ENCODE measurements at regions of chr5 and their contacts with region 1.

Region 1: DNA sequence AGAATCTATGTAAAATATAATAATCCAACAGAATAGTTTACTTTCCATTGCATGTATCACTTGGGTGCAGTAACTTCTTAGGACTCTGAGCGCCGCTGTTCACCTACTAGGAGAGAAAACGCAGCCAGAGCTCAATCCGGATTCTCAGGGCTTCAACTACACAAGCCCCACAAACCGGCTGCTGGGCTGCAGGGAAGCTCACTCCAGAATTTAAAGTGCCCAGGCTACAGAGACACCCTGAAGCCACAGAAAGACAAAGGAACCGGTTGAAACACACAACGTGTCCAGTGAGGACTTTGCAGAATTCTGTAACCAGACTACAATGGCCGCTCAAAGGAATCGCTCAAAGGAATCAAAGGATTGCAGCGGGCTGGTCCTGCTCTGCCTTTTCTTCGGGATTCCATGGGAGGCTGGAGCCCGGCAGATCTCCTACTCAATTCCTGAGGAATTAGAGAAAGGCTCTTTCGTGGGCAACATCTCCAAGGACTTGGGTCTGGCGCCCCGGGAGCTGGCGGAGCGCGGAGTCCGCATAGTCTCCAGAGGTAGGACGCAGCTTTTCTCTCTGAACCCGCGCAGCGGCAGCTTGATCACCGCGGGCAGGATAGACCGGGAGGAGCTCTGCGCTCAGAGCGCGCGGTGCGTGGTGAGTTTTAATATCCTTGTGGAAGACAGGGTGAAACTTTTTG is at the start of gene PCDHGA10:
- DNase-seq: peak in 2 of 4 donors; percentile 24 to 80
- ATAC-seq: peak; percentile 71
- H3K4me3 ChIP-seq: peak within 1 kb of the TSS in 1 of 2 donors; percentile 33
- H3K27ac ChIP-seq: no peak within 1 kb of the TSS
- H3K4me1 ChIP-seq: peaks cover 0 to 5% of the 10 kb centered on the region in 2 donors
- H3K27me3 ChIP-seq: peaks cover 25 to 94% of the 10 kb centered on the region in 2 donors
- CTCF ChIP-seq: peak; percentile 29 to 49
- polyA plus RNA-seq, gene PCDHGA10: 3.9 to 5.5 (median 4.7) TPM

Region 2: GRCh38 chr5:140916349-140916748 is 496.6 kb before region 1 on chr5:
- intact Hi-C with region 1: no loop called
- DNase-seq: no peak
- ATAC-seq: no peak
- H3K4me3 ChIP-seq: no peak overlapping the region
- H3K27ac ChIP-seq: no peak overlapping the region
- H3K4me1 ChIP-seq: no peaks in the 10 kb centered on the region
- H3K27me3 ChIP-seq: no peaks in the 10 kb centered on the region
- CTCF ChIP-seq: no peak

Region 3: GRCh38 chr5:141524604-141525597 is 111.9 kb after region 1 on chr5:
- intact Hi-C with region 1: loop called in 1 of 2 experiments (anchors 10 kb)
- DNase-seq: peak; percentile 80 to 97 (median 93)
- ATAC-seq: peak; percentile 93
- H3K4me3 ChIP-seq: no peak overlapping the region
- H3K27ac ChIP-seq: peak overlapping the region; percentile 60 to 72
- H3K4me1 ChIP-seq: peaks cover 10 to 66% of the 10 kb centered on the region in 2 donors
- H3K27me3 ChIP-seq: no peaks in the 10 kb centered on the region
- CTCF ChIP-seq: peak; percentile 97 to 98

Region 4: GRCh38 chr5:141564216-141564692 is 151.3 kb after region 1 on chr5:
- intact Hi-C with region 1: loop called in 1 of 2 experiments (anchors 10 kb)
- DNase-seq: peak in 2 of 4 donors; percentile 81 to 94
- ATAC-seq: peak; percentile 74
- H3K4me3 ChIP-seq: no peak overlapping the region
- H3K27ac ChIP-seq: peak overlapping the region in 1 of 2 donors; percentile 60
- H3K4me1 ChIP-seq: peaks cover 14 to 44% of the 10 kb centered on the region in 2 donors
- H3K27me3 ChIP-seq: no peaks in the 10 kb centered on the region
- CTCF ChIP-seq: peak; percentile 86 to 90

Region 5: GRCh38 chr5:141742866-141743851 is 330.2 kb after region 1 on chr5:
- intact Hi-C with region 1: no loop called
- DNase-seq: peak in 3 of 4 donors; percentile 30 to 70 (median 32)
- ATAC-seq: peak; percentile 70
- H3K4me3 ChIP-seq: no peak overlapping the region
- H3K27ac ChIP-seq: no peak overlapping the region
- H3K4me1 ChIP-seq: no peaks in the 10 kb centered on the region
- H3K27me3 ChIP-seq: peaks cover 0 to 24% of the 10 kb centered on the region in 2 donors
- CTCF ChIP-seq: no peak

Measured in left lung (tissue), 14 donors.